GM23248 (cell line): ENCODE measurements at regions of chr22 and their contacts with region 1.

Region 1: DNA sequence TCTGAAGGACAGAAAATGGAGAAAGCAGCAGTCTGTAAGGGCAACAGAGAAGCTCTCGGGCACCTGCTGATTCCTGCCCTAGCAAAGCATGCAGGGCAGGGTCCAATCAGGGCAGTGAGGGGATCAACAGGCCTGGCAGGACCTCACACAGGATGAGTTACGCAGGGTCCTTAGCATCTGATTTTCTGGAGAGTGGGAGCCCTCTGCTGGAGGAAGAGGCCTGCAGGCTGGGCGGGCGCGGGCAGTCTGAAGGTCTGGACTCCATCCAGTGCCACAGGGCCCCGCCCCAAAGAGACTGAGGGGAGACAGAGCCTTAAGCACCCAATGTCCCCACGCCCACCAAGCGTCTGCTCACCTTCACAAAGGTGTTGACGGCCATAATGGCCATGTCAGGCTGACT is 28.9 kb downstream of the AP1B1 start:
- DNase-seq: peak; percentile 65
- H3K4me3 ChIP-seq: no peak overlapping the region
- H3K27ac ChIP-seq: no peak overlapping the region
- H3K4me1 ChIP-seq: no peaks in the 10 kb centered on the region
- H3K27me3 ChIP-seq: no peaks in the 10 kb centered on the region

Region 2: GRCh38 chr22:29470159-29470855 is 110.8 kb after region 1 on chr22:
- in situ Hi-C with region 1: loop called (anchors 25 kb)
- DNase-seq: peak; percentile 77
- H3K4me3 ChIP-seq: peak overlapping the region; percentile 40
- H3K27ac ChIP-seq: no peak overlapping the region
- H3K4me1 ChIP-seq: no peaks in the 10 kb centered on the region
- H3K27me3 ChIP-seq: peaks cover 9% of the 10 kb centered on the region; the same call in 1 of the 2 replicates